Panc1 (cell line): ENCODE measurements at regions of chr15 and their contacts with region 1.

Region 1: GRCh38 chr15:93109336-93110102 is 20.5 kb upstream of the RGMA start:
- DNase-seq: no peak
- ATAC-seq: no peak
- H3K4me3 ChIP-seq: no peak overlapping the region
- H3K27ac ChIP-seq: no peak overlapping the region
- H3K4me1 ChIP-seq: no peaks in the 10 kb centered on the region
- H3K27me3 ChIP-seq: 0 out of 2 replicates have a peak, but pooled peaks cover 2% of the 10 kb centered on the region
- CTCF ChIP-seq: no peak

Region 2: GRCh38 chr15:94709319-94709718 is 1599.8 kb after region 1 on chr15:
- CTCF ChIA-PET with region 1: no interaction called
- POLR2A ChIA-PET with region 1: interaction called, 21 read pairs
- in situ Hi-C with region 1: no loop called
- intact Hi-C with region 1: no loop called
- DNase-seq: no peak
- ATAC-seq: no peak
- H3K4me3 ChIP-seq: no peak overlapping the region
- H3K27ac ChIP-seq: no peak overlapping the region
- H3K4me1 ChIP-seq: no peaks in the 10 kb centered on the region
- H3K27me3 ChIP-seq: no peaks in the 10 kb centered on the region
- CTCF ChIP-seq: no peak